SK-N-SH (cell line): ENCODE measurements at regions of chr10 and their contacts with region 1.

Region 1: GRCh38 chr10:132360766-132361447 is 28.9 kb downstream of the LRRC27 start:
- DNase-seq: peak; percentile 80
- H3K4me3 ChIP-seq: no peak overlapping the region
- H3K27ac ChIP-seq: no peak overlapping the region
- H3K4me1 ChIP-seq: no peaks in the 10 kb centered on the region
- H3K27me3 ChIP-seq: no peaks in the 10 kb centered on the region
- CTCF ChIP-seq: peak; percentile 70
- EP300 ChIP-seq: no peak
- RAD21 ChIP-seq: peak; percentile 32; the same call in 1 of the 2 replicates

Region 2: DNA sequence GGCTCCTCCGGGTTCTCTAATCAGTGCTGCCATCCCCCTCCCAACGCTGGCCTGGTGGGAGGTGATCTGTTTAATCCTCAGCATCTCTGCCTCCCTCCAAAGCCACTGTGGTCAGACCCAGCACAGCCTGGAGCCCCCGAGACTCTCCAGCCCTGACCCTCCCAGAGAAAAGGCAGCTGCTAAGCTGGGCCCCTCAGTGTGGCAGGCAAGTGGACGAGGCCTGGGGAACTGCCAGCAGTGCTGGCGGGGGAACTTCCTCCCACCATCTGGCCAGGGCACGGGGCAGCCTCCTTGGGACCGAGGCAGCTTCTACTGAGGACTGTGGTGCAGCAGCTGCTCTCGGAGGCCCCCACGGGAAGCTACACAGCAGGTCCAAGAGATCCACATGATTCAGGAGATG is 123.0 kb before region 1 on chr10:
- CTCF ChIA-PET with region 1: interaction called, 10 read pairs
- POLR2A ChIA-PET with region 1: no interaction called
- DNase-seq: peak; percentile 84
- H3K4me3 ChIP-seq: no peak overlapping the region
- H3K27ac ChIP-seq: peak overlapping the region in 1 of 2 experiments; percentile 99; a peak in 2 of 4 replicates
- H3K4me1 ChIP-seq: peaks cover 0 to 60% of the 10 kb centered on the region in 2 experiments; a peak in 1 of 4 replicates
- H3K27me3 ChIP-seq: no peaks in the 10 kb centered on the region
- CTCF ChIP-seq: no peak
- EP300 ChIP-seq: no peak
- RAD21 ChIP-seq: no peak

Region 3: GRCh38 chr10:132371641-132372081 is 10.8 kb after region 1 on chr10:
- CTCF ChIA-PET with region 1: interaction called, 17 read pairs
- POLR2A ChIA-PET with region 1: no interaction called
- DNase-seq: no peak
- H3K4me3 ChIP-seq: no peak overlapping the region
- H3K27ac ChIP-seq: no peak overlapping the region
- H3K4me1 ChIP-seq: no peaks in the 10 kb centered on the region
- H3K27me3 ChIP-seq: no peaks in the 10 kb centered on the region
- CTCF ChIP-seq: peak; percentile 45
- EP300 ChIP-seq: no peak
- RAD21 ChIP-seq: 0 out of 2 replicates have a peak, but pooled peaks have one; percentile 9

Region 4: DNA sequence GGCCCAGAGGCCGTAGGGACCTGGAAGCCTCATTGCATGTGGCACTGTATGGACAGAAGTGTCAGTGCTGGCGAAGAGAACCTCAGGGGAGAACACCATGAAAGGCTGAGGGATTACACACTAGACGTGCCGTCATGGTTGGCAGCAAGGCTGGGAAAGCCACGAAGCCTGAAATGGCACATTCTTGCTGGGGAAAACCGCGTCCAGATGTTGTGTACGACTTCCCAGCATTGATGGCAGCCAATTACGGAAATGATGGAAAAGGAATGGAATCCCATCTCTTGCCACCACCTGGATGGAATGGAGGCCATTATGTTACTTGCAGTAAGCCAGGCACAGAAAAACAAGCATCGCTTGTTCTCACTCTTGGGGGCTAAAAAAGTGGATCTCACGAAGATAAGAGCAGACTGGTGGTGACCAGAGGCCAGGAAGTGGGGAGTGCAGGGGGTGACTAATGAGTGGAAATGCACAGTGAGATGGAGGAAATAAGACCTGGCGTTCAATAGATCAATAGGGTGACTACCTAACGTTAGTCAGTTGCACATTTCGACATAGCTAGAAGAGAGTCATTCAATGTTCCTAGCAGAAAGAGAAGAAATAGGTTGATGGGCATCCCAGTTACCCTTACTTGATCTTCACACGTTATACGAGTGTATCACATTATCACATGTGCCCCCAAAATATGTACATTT is 21.5 kb after region 1 on chr10:
- CTCF ChIA-PET with region 1: interaction called, 10 read pairs
- POLR2A ChIA-PET with region 1: no interaction called
- DNase-seq: no peak
- H3K4me3 ChIP-seq: no peak overlapping the region
- H3K27ac ChIP-seq: no peak overlapping the region
- H3K4me1 ChIP-seq: peaks cover 0 to 7% of the 10 kb centered on the region in 2 experiments; a peak in 1 of 4 replicates
- H3K27me3 ChIP-seq: no peaks in the 10 kb centered on the region
- CTCF ChIP-seq: no peak
- EP300 ChIP-seq: no peak
- RAD21 ChIP-seq: no peak

Region 5: GRCh38 chr10:132407814-132408278 is 46.9 kb after region 1 on chr10:
- CTCF ChIA-PET with region 1: no interaction called
- POLR2A ChIA-PET with region 1: no interaction called
- DNase-seq: peak; percentile 55
- H3K4me3 ChIP-seq: no peak overlapping the region
- H3K27ac ChIP-seq: peak overlapping the region in 1 of 2 experiments; percentile 30; a peak in 1 of 4 replicates
- H3K4me1 ChIP-seq: peaks cover 0 to 21% of the 10 kb centered on the region in 2 experiments; a peak in 1 of 4 replicates
- H3K27me3 ChIP-seq: no peaks in the 10 kb centered on the region
- CTCF ChIP-seq: no peak
- EP300 ChIP-seq: no peak
- RAD21 ChIP-seq: no peak

Region 6: GRCh38 chr10:133608855-133609254 is 1247.9 kb after region 1 on chr10:
- CTCF ChIA-PET with region 1: no interaction called
- POLR2A ChIA-PET with region 1: no interaction called
- DNase-seq: peak; percentile 38
- H3K4me3 ChIP-seq: no peak overlapping the region
- H3K27ac ChIP-seq: no peak overlapping the region
- H3K4me1 ChIP-seq: no peaks in the 10 kb centered on the region
- H3K27me3 ChIP-seq: peaks cover 18% of the 10 kb centered on the region; the same call in 1 of the 2 replicates
- CTCF ChIP-seq: peak; percentile 61
- EP300 ChIP-seq: no peak
- RAD21 ChIP-seq: peak; percentile 56